ENCODE measurements at regions of chr5 and their contacts with region 1.

Region 1: DNA sequence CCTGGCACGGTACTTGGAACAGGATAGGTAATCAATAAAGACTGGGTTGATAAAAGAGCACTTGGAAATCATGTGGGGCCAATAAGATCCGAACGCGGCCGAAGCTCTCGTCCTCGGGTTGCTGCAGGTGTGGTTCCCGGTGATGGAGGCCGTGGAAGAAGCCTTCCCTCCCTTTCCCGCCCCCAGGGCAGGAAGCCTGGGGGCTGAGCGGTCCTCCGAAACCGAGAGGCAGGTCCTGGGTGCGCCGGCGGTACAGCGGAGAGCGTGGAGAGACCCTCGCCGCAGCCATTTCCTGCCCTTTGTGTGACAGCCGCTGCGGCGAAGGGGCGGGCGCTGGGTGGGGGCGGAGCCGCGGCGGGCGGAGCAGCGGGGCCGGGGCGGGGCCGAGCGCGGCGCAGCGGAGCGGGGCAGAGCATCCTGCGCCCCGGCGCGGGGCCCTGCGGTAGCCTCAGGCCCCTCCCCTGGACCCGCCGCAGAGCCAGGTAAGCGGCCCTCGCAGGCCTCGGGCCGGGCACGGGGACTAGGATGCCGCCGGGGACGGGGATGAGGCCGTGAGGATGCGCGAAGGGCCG is at the start of gene CYFIP2:
- DNase-seq: no peak
- ATAC-seq: peak; percentile 96
- H3K4me3 ChIP-seq: peak within 1 kb of the TSS; percentile 58 to 73
- H3K27ac ChIP-seq: peak within 1 kb of the TSS; percentile 67
- H3K4me1 ChIP-seq: peaks cover 6 to 19% of the 10 kb centered on the region in 2 experiments; a peak in 3 of 4 replicates
- H3K27me3 ChIP-seq: 0 out of 2 replicates have a peak, but pooled peaks cover 4% of the 10 kb centered on the region
- CTCF ChIP-seq: no peak
- POLR2A ChIP-seq: no peak
- RAD21 ChIP-seq: no peak
- total RNA-seq, gene CYFIP2: 45.1 TPM

Region 2: GRCh38 chr5:156850206-156850751 is 415.5 kb before region 1 on chr5 and contains the start of gene PPP1R2B:
- CTCF ChIA-PET with region 1: no interaction called
- POLR2A ChIA-PET with region 1: no interaction called
- RAD21 ChIA-PET with region 1: no interaction called
- intact Hi-C with region 1: no loop called
- DNase-seq: no peak
- ATAC-seq: no peak
- H3K4me3 ChIP-seq: no peak within 1 kb of the TSS
- H3K27ac ChIP-seq: no peak within 1 kb of the TSS
- H3K4me1 ChIP-seq: no peaks in the 10 kb centered on the region
- H3K27me3 ChIP-seq: no peaks in the 10 kb centered on the region
- CTCF ChIP-seq: no peak
- POLR2A ChIP-seq: no peak
- RAD21 ChIP-seq: no peak
- total RNA-seq, gene PPP1R2B: not detected

Region 3: DNA sequence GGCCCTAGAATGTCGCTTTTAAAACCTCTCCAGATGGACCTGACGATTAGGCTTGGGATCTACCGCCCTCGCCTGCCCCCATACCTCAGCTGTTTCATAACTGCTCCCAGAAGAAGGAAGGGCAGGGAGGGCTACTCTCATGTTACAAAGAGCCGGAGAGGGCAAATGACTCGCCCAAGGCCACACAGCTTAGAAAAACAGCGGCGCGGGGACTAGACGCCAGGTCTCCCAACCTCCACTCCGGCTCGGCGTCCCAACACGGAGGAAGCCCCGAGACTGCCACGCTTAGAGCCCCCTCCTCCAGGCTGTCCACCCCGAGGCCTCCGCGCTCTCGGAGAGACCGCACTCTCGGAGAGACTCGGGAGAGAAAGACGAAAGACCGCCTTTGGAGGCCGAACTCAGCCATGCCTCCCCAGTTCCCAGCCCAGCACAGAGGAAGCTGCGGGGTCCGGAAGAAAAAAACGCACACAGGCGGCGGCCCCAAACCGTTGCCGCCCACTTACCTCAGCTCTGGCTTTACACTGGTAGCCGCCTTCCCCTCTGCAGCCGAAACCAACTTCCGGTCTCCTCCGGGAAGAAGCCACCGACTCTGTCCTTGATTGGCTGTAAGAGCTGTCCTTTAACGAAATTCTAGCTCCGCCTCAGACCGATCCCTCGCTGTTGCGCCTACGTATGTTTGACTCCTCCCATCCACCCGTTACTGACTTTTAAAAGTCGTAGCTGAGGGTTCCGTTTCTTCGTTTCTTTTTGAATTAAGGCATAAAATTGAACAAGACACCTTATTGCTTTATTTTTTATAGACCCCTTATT is 123.3 kb before region 1 on chr5 and contains the start of gene MED7:
- CTCF ChIA-PET with region 1: no interaction called
- POLR2A ChIA-PET with region 1: no interaction called
- RAD21 ChIA-PET with region 1: no interaction called
- intact Hi-C with region 1: loop called (anchors 10 kb)
- DNase-seq: peak; percentile 99
- ATAC-seq: peak; percentile 99
- H3K4me3 ChIP-seq: peak within 1 kb of the TSS; percentile 94 to 95
- H3K27ac ChIP-seq: peak within 1 kb of the TSS; percentile 73
- H3K4me1 ChIP-seq: peaks cover 5 to 13% of the 10 kb centered on the region in 2 experiments; a peak in 3 of 4 replicates
- H3K27me3 ChIP-seq: no peaks in the 10 kb centered on the region
- CTCF ChIP-seq: no peak
- POLR2A ChIP-seq: peak; percentile 87
- RAD21 ChIP-seq: no peak
- total RNA-seq, gene MED7: 9.1 TPM

Region 4: GRCh38 chr5:157148734-157149615 is 116.8 kb before region 1 on chr5:
- CTCF ChIA-PET with region 1: interaction called, 13 read pairs
- POLR2A ChIA-PET with region 1: no interaction called
- RAD21 ChIA-PET with region 1: no interaction called
- intact Hi-C with region 1: loop called (anchors 10 kb)
- DNase-seq: peak; percentile 61
- ATAC-seq: peak; percentile 95
- H3K4me3 ChIP-seq: no peak overlapping the region
- H3K27ac ChIP-seq: no peak overlapping the region
- H3K4me1 ChIP-seq: no peaks in the 10 kb centered on the region
- H3K27me3 ChIP-seq: no peaks in the 10 kb centered on the region
- CTCF ChIP-seq: peak; percentile 77 to 86 (median 86)
- POLR2A ChIP-seq: no peak
- RAD21 ChIP-seq: peak; percentile 82

Region 5: DNA sequence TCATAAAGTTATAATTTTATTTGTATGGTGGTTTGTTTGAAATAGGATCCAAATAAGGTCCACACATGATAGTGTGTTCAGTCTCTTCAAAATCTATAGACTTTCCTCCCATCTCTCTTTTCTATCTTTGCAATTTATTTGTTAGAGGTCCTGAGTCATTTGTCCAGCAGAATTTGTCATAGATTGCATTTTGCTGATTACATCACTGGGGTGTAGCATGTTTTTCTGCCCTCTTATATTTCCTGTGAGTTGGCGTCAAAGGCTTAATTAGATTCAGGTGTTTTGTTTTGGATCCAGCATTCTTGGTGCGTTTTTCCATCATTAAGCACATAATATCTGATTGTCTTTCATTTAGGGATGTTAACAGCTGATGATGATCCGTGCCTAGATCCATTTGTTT is 15.1 kb after region 1 on chr5:
- CTCF ChIA-PET with region 1: no interaction called
- POLR2A ChIA-PET with region 1: no interaction called
- RAD21 ChIA-PET with region 1: no interaction called
- intact Hi-C with region 1: no loop called
- DNase-seq: no peak
- ATAC-seq: no peak
- H3K4me3 ChIP-seq: no peak overlapping the region
- H3K27ac ChIP-seq: no peak overlapping the region
- H3K4me1 ChIP-seq: no peaks in the 10 kb centered on the region
- H3K27me3 ChIP-seq: no peaks in the 10 kb centered on the region
- CTCF ChIP-seq: no peak
- POLR2A ChIP-seq: no peak
- RAD21 ChIP-seq: no peak

Measured in HCT116 (cell line).